ENCODE measurements at regions of chr19 and their contacts with region 1.

Region 1: DNA sequence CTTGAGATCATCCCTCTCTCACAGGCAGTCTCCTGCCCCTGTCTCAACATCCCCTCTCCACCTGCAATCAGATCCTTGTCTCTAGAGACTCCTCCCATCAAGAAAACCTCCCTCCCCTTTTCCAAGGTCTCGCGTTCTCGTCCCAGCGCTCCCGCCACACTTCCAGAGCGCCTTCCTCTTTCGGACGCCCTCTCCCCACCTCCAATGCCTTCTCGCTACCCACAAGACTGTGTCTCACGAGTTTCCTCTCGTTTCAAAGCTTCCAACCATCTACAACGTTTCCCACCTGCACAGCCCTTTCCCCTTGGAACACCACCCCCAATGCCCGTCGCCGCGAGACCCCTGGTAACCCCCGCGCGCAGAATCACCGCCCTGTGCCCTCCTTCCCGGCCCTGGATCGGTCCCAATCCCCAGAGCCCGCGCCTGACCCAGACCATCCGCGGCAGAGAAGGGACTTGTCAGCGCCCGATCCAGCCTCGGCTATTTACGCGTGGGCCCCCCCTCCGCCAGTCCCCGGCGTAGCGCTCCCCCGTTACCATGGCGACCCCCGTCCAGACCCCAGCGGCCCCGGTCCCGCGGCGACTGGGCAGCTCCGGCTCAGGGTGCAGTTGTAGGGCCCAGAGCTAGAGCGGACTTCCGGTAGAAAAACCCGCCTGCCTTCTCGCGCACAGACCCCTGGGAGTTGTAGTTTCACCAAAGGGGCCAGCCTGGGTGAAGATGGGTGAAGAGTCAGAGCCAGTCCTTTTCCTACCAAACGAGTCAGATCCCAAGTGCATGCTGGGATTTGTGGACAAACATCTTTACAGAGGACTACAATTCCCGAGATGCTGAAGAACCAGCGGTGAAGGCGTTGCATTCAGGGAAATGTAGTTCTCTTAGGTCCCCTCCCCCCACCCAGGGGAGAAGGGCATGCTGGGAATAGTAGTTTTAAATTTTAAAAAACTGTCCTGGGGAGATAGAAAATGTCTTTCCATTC is at the start of gene AP2S1:
- DNase-seq: peak; percentile 95
- ATAC-seq: peak; percentile 97
- H3K4me3 Mint-ChIP-seq: peak within 1 kb of the TSS; percentile 92
- H3K27ac Mint-ChIP-seq: peak within 1 kb of the TSS; percentile 64
- H3K4me1 Mint-ChIP-seq: peaks cover 21% of the 10 kb centered on the region
- H3K27me3 Mint-ChIP-seq: no peaks in the 10 kb centered on the region
- total RNA-seq, gene AP2S1: 102 to 104 TPM

Region 2: DNA sequence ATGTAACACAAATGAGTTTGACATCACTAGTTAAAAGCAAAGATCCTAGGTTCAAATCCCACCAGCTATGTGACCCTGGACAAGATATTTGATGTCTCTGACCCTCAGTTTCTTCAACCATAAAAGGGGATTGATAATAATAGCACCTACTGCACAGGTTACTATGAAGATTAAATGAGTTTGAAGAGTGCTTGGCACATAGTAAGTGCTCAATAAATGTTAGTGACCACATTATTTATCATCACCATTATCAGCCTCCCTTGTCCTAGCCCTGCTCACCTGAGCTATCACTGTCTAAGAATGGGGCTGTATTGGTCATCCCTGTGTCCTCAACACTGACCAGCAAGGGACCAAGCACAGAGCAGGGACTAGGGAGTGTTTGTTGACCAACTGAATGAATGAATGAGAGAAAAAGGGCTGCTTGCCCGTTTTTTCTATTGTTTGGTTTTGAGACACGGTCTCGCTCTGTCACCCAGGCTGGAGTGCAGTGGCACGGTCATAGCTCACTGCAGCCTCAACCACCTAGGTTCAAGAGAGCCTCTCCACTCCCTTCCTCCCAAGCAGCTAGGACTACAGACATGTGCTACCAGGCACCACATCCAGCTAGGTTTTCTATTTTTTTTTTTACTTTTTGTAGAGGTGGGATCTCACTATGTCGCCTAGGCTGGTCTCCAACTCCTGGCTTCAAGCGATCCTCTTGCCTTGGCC is 162.9 kb before region 1 on chr19:
- CTCF ChIA-PET with region 1: no interaction called
- POLR2A ChIA-PET with region 1: no interaction called
- intact Hi-C with region 1: no loop called
- DNase-seq: no peak
- ATAC-seq: no peak
- H3K4me3 Mint-ChIP-seq: no peak overlapping the region
- H3K27ac Mint-ChIP-seq: peak overlapping the region; percentile 13
- H3K4me1 Mint-ChIP-seq: no peaks in the 10 kb centered on the region
- H3K27me3 Mint-ChIP-seq: no peaks in the 10 kb centered on the region

Region 3: DNA sequence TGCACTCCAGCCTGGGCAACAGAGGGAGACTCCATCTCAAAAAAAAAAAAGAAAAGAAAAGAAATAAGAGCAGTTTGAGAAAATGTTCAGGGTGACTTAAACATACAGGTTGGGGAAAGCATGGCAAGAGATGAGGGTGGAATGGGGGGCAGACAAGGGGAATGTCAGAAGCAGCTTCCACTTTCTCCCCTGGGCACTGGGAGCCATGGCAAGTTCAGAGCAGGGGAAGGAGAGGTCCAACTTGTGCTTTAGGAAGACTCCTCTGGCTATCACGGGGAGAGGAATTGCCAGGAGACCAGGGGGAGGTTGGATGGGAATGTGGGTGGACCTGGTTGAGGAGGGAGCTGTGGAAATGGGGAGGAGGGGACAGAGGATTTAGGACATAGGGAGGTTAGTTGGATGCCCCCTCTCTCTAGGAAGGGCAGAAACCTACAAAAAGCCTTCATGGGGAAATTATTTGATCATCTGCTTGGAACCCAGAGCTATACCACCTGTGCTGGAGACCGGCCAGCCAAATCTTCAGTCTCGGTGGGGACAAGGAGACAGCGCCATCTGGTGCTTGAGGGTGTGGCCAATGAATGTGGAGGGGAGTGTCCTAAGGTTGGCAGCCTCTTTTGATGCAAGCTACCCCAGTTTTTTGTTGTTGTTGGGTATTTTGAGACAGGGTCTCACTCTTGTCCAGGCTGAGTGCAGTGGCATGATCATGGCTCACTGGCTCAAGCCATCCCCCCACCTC is 96.9 kb before region 1 on chr19:
- CTCF ChIA-PET with region 1: interaction called, 10 read pairs
- POLR2A ChIA-PET with region 1: interaction called, 5 read pairs
- intact Hi-C with region 1: no loop called
- DNase-seq: peak; percentile 86
- ATAC-seq: peak; percentile 91
- H3K4me3 Mint-ChIP-seq: no peak overlapping the region
- H3K27ac Mint-ChIP-seq: no peak overlapping the region
- H3K4me1 Mint-ChIP-seq: peaks cover 6% of the 10 kb centered on the region
- H3K27me3 Mint-ChIP-seq: no peaks in the 10 kb centered on the region

Region 4: GRCh38 chr19:46828484-46828883 is 22.0 kb before region 1 on chr19:
- CTCF ChIA-PET with region 1: no interaction called
- POLR2A ChIA-PET with region 1: no interaction called
- intact Hi-C with region 1: loop called in 1 of 2 experiments (anchors 1 kb)
- DNase-seq: peak; percentile 83
- ATAC-seq: peak; percentile 82
- H3K4me3 Mint-ChIP-seq: no peak overlapping the region
- H3K27ac Mint-ChIP-seq: no peak overlapping the region
- H3K4me1 Mint-ChIP-seq: peaks cover 15% of the 10 kb centered on the region
- H3K27me3 Mint-ChIP-seq: no peaks in the 10 kb centered on the region

Region 5: DNA sequence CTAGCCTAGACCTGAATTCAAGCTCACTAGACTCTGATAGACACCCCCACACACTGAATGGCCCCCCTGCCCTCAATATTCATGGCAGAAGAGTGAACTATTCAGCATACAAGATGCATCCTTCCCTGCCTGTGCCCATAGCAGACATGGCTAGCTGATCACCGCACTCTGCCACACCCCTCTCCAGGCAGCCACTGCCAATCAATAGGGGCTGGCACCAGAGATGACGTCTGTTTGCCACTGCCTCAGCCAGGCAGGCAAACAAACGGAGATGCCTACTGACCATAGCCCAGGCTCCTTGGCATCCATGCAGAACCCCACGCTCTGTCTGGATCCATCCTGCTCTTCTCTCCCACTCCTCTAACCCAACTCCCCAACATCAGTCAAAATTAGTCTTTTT is 155.4 kb after region 1 on chr19:
- CTCF ChIA-PET with region 1: no interaction called
- POLR2A ChIA-PET with region 1: no interaction called
- intact Hi-C with region 1: no loop called
- DNase-seq: peak; percentile 42
- ATAC-seq: peak; percentile 60
- H3K4me3 Mint-ChIP-seq: no peak overlapping the region
- H3K27ac Mint-ChIP-seq: no peak overlapping the region
- H3K4me1 Mint-ChIP-seq: no peaks in the 10 kb centered on the region
- H3K27me3 Mint-ChIP-seq: peaks cover 5% of the 10 kb centered on the region

Measured in activated CD4-positive, alpha-beta T cell treated with anti-CD3 and anti-CD28 coated beads for 36 hours (primary cell).